Right ventricle myocardium inferior (tissue), 1 donor: ENCODE measurements at regions of chr19 and their contacts with region 1.

Region 1: DNA sequence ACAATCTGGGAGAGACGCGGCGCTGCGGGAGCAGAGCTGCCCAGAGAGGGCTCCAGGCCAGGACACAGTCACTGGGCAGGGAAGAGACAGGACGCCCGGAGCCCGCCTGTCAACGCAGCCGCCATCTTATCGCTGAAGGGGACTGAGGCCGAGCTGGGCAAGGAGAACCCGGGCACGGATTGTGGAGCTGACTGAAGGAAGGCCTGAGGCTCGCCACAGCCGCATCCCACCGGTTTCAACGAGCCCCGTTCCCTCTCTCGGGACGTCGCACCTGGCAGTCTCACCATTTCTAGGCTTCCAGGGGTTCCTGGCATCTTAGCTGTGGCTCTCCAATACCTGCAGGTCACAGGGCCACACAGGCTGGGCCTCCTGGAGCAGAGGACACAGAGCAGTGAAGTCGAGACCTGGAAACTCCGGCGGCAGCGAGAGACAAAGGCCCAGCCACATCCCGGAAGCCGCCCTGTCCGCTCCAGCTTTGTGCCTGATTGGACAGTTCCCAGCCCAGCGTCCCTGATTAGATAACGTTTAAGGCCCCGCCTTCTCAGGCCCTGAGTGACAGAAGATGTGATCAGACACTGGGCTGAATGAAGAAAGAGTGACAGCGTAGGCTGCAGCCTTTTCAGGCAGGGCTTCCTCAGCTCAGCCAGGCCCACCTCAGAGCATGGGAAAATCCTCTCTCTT is at the start of gene ZNF91:
- DNase-seq: peak; percentile 96
- ATAC-seq: peak; percentile 97
- total RNA-seq, gene ZNF91: 90.1 TPM

Region 2: GRCh38 chr19:23273590-23274413 is 121.4 kb before region 1 on chr19:
- intact Hi-C with region 1: loop called (anchors 10 kb)
- DNase-seq: peak; percentile 88
- ATAC-seq: peak; percentile 100

Region 3: DNA sequence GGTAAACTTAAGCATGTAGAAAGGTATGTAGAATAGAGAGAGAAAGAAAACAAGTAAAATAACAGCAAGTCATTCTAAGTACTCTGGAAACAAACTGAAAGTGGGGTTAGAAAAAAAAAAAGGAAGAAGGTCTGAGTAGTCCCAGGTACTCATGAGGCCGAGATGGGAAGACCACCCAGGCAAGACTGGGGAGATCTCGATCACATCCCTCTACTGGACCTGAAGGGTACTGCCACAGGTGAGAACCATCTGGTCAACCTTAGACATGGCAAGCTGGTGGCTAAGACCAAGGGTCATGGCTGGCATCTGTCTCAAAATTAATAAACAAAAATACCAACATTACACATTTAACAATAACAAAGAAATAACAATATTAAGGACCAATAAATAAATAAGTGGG is 108.7 kb before region 1 on chr19:
- intact Hi-C with region 1: no loop called
- DNase-seq: no peak
- ATAC-seq: no peak

Region 4: GRCh38 chr19:23345838-23346237 is 49.3 kb before region 1 on chr19:
- intact Hi-C with region 1: loop called (anchors 10 kb)
- DNase-seq: no peak
- ATAC-seq: no peak

Region 5: DNA sequence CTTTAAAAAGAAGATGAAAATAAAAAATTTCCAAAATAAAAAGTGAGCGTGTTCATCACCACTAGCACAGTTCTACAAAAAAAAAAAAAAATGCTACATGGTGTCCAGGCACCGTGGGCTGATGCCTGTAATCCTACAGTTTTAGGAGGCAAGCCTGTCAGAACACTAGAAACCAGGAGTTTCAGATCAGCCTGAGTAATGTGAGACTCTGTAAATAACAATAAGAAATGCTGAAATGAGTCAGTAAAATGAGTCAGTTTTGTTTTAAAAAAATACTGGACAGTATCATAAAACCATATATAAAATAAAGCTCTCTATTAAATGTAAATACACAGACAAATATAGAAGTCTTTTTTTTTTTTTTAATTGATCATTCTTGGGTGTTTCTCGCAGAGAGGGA is 30.0 kb before region 1 on chr19:
- intact Hi-C with region 1: no loop called
- DNase-seq: no peak
- ATAC-seq: no peak

Region 6: DNA sequence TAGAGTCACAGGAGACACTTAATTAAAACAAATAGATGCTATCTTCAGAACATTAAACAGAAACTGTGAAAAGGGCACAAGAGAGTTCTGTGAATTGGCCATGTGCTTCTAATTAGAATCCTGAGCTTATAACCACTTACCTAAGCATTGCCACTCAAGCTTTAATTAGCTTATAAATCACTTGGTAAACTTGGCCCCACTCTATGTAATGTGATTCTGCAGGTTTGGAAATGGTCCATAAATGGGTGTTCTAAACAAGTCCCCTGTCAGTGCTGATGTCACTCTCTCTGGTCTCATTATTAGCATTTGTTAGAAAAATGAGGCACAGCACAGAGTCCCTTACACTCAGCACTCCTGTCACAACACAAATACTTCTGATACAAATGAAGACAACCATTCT is 17.9 kb before region 1 on chr19:
- intact Hi-C with region 1: loop called (anchors 2 kb)
- DNase-seq: no peak
- ATAC-seq: peak; percentile 38